A673 (cell line): ENCODE measurements at regions of chr12 and their contacts with region 1.

Region 1: GRCh38 chr12:7933255-7933729 is 2.7 kb downstream of the SLC2A3 start:
- DNase-seq: peak; percentile 97
- H3K4me3 ChIP-seq: peak overlapping the region; percentile 59
- H3K27ac ChIP-seq: peak overlapping the region; percentile 70
- H3K4me1 ChIP-seq: peaks cover 31% of the 10 kb centered on the region
- H3K27me3 ChIP-seq: no peaks in the 10 kb centered on the region
- CTCF ChIP-seq: peak; percentile 90

Region 2: DNA sequence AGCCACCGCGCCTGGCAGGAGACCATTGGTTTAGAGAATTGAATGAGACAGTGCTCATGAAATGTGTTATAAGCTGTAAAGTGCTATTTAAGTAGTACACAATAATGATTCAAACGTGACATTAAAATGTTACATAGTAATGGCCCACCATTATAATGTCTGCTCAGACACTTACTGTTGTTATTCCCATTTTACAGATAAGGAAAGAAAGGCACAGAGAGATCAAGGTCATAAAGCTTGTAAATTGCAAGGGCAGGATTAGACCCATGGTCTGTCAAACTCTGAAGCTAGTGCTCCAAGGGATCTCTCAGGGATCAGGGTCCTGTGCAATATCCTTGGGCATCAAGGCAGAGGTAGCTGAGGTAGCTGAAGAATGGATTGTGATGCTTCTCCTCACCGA is 623.2 kb before region 1 on chr12:
- CTCF ChIA-PET with region 1: no interaction called
- POLR2A ChIA-PET with region 1: interaction called, 10 read pairs
- intact Hi-C with region 1: no loop called
- DNase-seq: no peak
- H3K4me3 ChIP-seq: no peak overlapping the region
- H3K27ac ChIP-seq: no peak overlapping the region
- H3K4me1 ChIP-seq: no peaks in the 10 kb centered on the region
- H3K27me3 ChIP-seq: no peaks in the 10 kb centered on the region
- CTCF ChIP-seq: no peak

Region 3: GRCh38 chr12:7859552-7859951 is 73.7 kb before region 1 on chr12:
- CTCF ChIA-PET with region 1: interaction called, 12 read pairs
- POLR2A ChIA-PET with region 1: no interaction called
- intact Hi-C with region 1: loop called (anchors 1 kb)
- DNase-seq: no peak
- H3K4me3 ChIP-seq: no peak overlapping the region
- H3K27ac ChIP-seq: no peak overlapping the region
- H3K4me1 ChIP-seq: peaks cover 18% of the 10 kb centered on the region
- H3K27me3 ChIP-seq: no peaks in the 10 kb centered on the region
- CTCF ChIP-seq: no peak

Region 4: DNA sequence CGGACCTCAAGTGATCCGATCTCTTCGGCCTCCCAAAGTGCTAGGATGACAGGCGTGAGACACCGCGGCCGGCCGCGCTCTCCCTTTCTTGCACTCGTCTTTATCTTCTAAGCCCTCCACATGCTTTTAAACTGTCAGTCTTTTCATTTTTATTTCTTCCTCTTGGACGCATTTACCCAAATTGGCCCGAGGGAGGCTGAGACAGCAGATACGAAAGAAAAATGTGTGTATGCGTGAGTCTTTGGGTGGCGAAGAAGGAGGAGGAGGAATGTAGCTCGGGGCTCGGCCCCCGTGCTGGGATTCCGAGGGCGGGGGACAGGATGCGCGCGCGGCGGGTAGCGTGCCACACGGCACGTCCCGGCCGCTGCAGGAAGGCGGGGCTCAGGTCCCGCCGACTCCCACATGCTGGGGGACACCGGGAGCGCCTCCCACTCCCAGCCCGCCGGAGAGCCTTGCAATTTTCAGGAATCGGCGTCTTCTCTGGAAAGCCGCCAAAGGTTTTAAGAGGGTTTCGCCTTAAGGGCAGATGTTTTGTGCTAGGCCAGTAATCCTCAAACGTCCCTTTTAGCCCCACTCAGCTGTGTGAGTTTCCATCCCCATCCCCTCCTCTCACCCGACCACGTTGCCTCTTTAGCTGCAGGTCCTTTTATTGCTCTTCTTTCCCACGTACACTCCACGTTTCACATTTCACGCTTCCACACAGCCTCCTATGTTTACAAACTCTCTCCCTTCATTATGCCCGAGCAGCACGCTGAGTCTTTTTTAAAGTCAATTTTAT is 37.4 kb after region 1 on chr12:
- CTCF ChIA-PET with region 1: interaction called, 10 read pairs
- POLR2A ChIA-PET with region 1: interaction called, 11 read pairs
- intact Hi-C with region 1: loop called (anchors 5 kb)
- DNase-seq: peak; percentile 97
- H3K4me3 ChIP-seq: peak overlapping the region; percentile 57
- H3K27ac ChIP-seq: peak overlapping the region; percentile 92
- H3K4me1 ChIP-seq: peaks cover 8% of the 10 kb centered on the region
- H3K27me3 ChIP-seq: no peaks in the 10 kb centered on the region
- CTCF ChIP-seq: 0 out of 2 replicates have a peak, but pooled peaks have one; percentile 14

Region 5: DNA sequence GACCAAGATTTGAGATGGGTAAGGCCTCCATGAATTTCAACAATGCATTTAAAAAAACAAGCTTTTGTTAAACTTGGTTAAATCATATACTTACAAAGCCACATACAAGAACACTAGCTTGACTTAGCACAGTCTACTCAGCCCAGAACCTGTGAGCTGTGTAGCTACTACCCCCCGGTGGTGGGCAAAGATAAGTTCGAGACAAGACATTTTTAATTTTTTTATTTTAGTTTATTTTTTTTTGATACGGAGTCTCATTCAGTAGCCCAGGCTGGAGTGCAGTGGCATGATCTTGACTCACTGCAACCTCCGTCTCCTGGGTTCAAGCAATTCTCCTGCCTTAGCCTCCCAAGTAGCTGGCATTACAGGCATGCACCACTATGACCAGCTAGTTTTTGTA is 145.1 kb after region 1 on chr12:
- CTCF ChIA-PET with region 1: interaction called, 16 read pairs
- POLR2A ChIA-PET with region 1: no interaction called
- intact Hi-C with region 1: no loop called
- DNase-seq: peak; percentile 80
- H3K4me3 ChIP-seq: no peak overlapping the region
- H3K27ac ChIP-seq: no peak overlapping the region
- H3K4me1 ChIP-seq: peaks cover 27% of the 10 kb centered on the region
- H3K27me3 ChIP-seq: no peaks in the 10 kb centered on the region
- CTCF ChIP-seq: peak; percentile 67